ENCODE measurements at regions of chr14 and their contacts with region 1.

Region 1: GRCh38 chr14:23269193-23269592 is 16.7 kb downstream of the HOMEZ start:
- DNase-seq: no peak
- ATAC-seq: no peak
- H3K4me3 ChIP-seq: no peak overlapping the region
- H3K27ac ChIP-seq: no peak overlapping the region
- H3K4me1 ChIP-seq: no peaks in the 10 kb centered on the region
- H3K27me3 ChIP-seq: no peaks in the 10 kb centered on the region
- CTCF ChIP-seq: no peak

Region 2: GRCh38 chr14:23335623-23336022 is 66.4 kb after region 1 on chr14:
- intact Hi-C with region 1: loop called in 1 of 10 experiments (anchors 10 kb)
- DNase-seq: no peak
- ATAC-seq: no peak
- H3K4me3 ChIP-seq: no peak overlapping the region
- H3K27ac ChIP-seq: no peak overlapping the region
- H3K4me1 ChIP-seq: no peaks in the 10 kb centered on the region
- H3K27me3 ChIP-seq: peaks cover 0 to 8% (median 0%) of the 10 kb centered on the region in 7 donors
- CTCF ChIP-seq: no peak

Region 3: GRCh38 chr14:23567192-23568020 is 298.2 kb after region 1 on chr14 and contains the start of gene AP1G2:
- intact Hi-C with region 1: loop called in 1 of 10 experiments (anchors 10 kb)
- DNase-seq: peak; percentile 84 to 85
- ATAC-seq: peak; percentile 59 to 89 (median 82)
- H3K4me3 ChIP-seq: peak within 1 kb of the TSS; percentile 59 to 78 (median 64)
- H3K27ac ChIP-seq: peak within 1 kb of the TSS in 8 of 10 donors; percentile 61 to 90 (median 71)
- H3K4me1 ChIP-seq: peaks cover 2 to 34% (median 16%) of the 10 kb centered on the region in 9 donors
- H3K27me3 ChIP-seq: peaks cover 0 to 12% (median 0%) of the 10 kb centered on the region in 7 donors
- CTCF ChIP-seq: no peak
- total RNA-seq, gene AP1G2: 6.6 to 19.9 (median 9.9) TPM

Measured in heart right ventricle (tissue), 16 donors.